ENCODE measurements at regions of chr10 and their contacts with region 1.

Region 1: GRCh38 chr10:45594276-45595106 is 78.1 kb downstream of the ZFAND4 start:
- DNase-seq: peak; percentile 89 to 94
- ATAC-seq: peak; percentile 91 to 96 (median 96)
- H3K4me3 ChIP-seq: peak overlapping the region; percentile 88
- H3K4me3 Mint-ChIP-seq: peak overlapping the region; percentile 85
- H3K27ac ChIP-seq: peak overlapping the region; percentile 80
- H3K27ac Mint-ChIP-seq: peak overlapping the region; percentile 73 to 85
- H3K4me1 ChIP-seq: peaks cover 7% of the 10 kb centered on the region
- H3K4me1 Mint-ChIP-seq: peaks cover 40 to 41% of the 10 kb centered on the region in 2 donors
- H3K27me3 ChIP-seq: peaks cover 1% of the 10 kb centered on the region
- H3K27me3 Mint-ChIP-seq: peaks cover 5 to 6% of the 10 kb centered on the region in 2 donors
- CTCF ChIP-seq: no peak

Region 2: DNA sequence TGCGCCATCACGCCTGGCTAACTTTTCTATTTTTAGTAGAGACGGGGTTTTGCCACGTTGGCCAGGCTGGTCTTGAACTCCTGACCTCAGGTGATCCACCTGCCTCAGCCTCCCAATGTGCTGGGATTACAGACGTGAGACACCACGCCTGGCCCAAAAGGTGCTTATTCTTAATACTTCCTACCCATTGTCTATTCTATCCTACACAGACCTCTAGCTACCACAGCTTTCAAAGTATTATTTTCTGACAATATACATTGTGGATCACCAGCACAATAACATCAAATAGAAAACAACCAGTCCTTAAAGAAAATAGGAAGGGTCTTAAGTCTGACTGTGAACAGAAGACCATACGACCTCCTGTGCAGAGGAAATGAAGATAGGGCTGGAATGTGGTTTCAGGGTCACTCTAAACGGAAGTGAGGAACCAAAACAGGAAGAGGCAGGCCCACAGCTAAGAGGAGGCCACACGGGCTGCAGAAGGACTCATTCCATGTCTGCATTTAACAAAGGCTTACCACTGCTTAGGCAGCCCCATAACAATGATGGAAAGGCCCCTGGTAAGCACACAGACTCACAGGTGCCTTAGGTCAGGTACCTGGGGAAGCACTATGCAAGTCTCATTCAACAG is 37.1 kb before region 1 on chr10:
- intact Hi-C with region 1: loop called (anchors 5 kb)
- DNase-seq: peak in 1 of 2 donors; percentile 41
- ATAC-seq: peak; percentile 85 to 89 (median 87)
- H3K4me3 ChIP-seq: no peak overlapping the region
- H3K4me3 Mint-ChIP-seq: peak overlapping the region; percentile 89
- H3K27ac ChIP-seq: peak overlapping the region; percentile 63
- H3K27ac Mint-ChIP-seq: peak overlapping the region; percentile 89 to 96
- H3K4me1 ChIP-seq: peaks cover 19% of the 10 kb centered on the region
- H3K4me1 Mint-ChIP-seq: peaks cover 40 to 43% of the 10 kb centered on the region in 2 donors
- H3K27me3 ChIP-seq: no peaks in the 10 kb centered on the region
- H3K27me3 Mint-ChIP-seq: no peaks in the 10 kb centered on the region
- CTCF ChIP-seq: no peak

Region 3: GRCh38 chr10:45580371-45581215 is 13.9 kb before region 1 on chr10:
- intact Hi-C with region 1: loop called (anchors 1 kb)
- DNase-seq: peak; percentile 42 to 67
- ATAC-seq: peak; percentile 72 to 90 (median 84)
- H3K4me3 ChIP-seq: peak overlapping the region; percentile 43
- H3K4me3 Mint-ChIP-seq: peak overlapping the region; percentile 94
- H3K27ac ChIP-seq: peak overlapping the region; percentile 83
- H3K27ac Mint-ChIP-seq: peak overlapping the region in 1 of 2 donors; percentile 98
- H3K4me1 ChIP-seq: peaks cover 17% of the 10 kb centered on the region
- H3K4me1 Mint-ChIP-seq: peaks cover 28 to 33% of the 10 kb centered on the region in 2 donors
- H3K27me3 ChIP-seq: no peaks in the 10 kb centered on the region
- H3K27me3 Mint-ChIP-seq: no peaks in the 10 kb centered on the region
- CTCF ChIP-seq: no peak

Region 4: GRCh38 chr10:45627412-45628048 is 33.0 kb after region 1 on chr10:
- intact Hi-C with region 1: no loop called
- DNase-seq: no peak
- ATAC-seq: no peak
- H3K4me3 ChIP-seq: no peak overlapping the region
- H3K4me3 Mint-ChIP-seq: no peak overlapping the region
- H3K27ac ChIP-seq: no peak overlapping the region
- H3K27ac Mint-ChIP-seq: no peak overlapping the region
- H3K4me1 ChIP-seq: no peaks in the 10 kb centered on the region
- H3K4me1 Mint-ChIP-seq: no peaks in the 10 kb centered on the region
- H3K27me3 ChIP-seq: no peaks in the 10 kb centered on the region
- H3K27me3 Mint-ChIP-seq: no peaks in the 10 kb centered on the region
- CTCF ChIP-seq: no peak

Region 5: GRCh38 chr10:45672181-45673073 is 77.9 kb after region 1 on chr10 and contains the start of gene ZFAND4:
- intact Hi-C with region 1: loop called (anchors 1 kb)
- DNase-seq: peak; percentile 92 to 96
- ATAC-seq: peak; percentile 93 to 99 (median 96)
- H3K4me3 ChIP-seq: peak within 1 kb of the TSS; percentile 82
- H3K4me3 Mint-ChIP-seq: peak within 1 kb of the TSS; percentile 92
- H3K27ac ChIP-seq: peak within 1 kb of the TSS; percentile 96
- H3K27ac Mint-ChIP-seq: peak within 1 kb of the TSS; percentile 87 to 92
- H3K4me1 ChIP-seq: peaks cover 17% of the 10 kb centered on the region
- H3K4me1 Mint-ChIP-seq: peaks cover 36 to 40% of the 10 kb centered on the region in 2 donors
- H3K27me3 ChIP-seq: no peaks in the 10 kb centered on the region
- H3K27me3 Mint-ChIP-seq: peaks cover 0 to 3% of the 10 kb centered on the region in 2 donors
- CTCF ChIP-seq: peak; percentile 68
- total RNA-seq, gene ZFAND4: 27.9 to 35.1 (median 32.1) TPM

Measured in natural killer cell (primary cell).